Activated CD8-positive, alpha-beta T cell treated with anti-CD3 and anti-CD28 coated beads for 36 hours (primary cell): ENCODE measurements at regions of chr20 and their contacts with region 1.

Region 1: DNA sequence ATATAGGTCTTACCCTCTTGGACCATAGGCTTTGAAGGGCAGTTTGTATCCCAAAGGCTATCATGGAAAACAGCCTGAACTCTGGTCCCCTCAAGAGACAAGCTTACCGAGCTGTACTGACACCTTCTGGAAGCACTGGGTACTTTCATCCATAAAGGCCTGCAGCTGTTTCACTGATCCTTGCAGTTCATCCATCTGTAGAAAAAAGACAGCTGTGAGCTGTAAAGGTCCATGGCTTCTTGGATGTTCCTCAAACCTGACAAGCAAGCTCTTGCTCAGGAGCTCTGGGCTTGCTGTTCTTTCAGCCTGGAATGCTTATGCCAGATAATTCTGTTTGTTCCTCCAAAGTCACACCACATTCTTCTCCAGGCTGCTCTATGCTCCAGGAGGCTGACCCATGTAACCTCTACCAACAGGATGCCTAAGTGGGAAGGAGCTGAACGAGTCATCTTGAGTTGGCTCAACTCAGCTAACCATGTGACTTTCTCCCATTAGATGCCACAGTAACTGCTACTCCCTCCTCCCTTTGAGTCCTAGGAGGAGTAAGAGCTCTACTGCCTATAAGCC is 8.8 kb upstream of the NDRG3 start:
- DNase-seq: peak; percentile 41
- ATAC-seq: peak; percentile 83
- H3K4me3 Mint-ChIP-seq: no peak overlapping the region
- H3K27ac Mint-ChIP-seq: no peak overlapping the region
- H3K4me1 Mint-ChIP-seq: peaks cover 5% of the 10 kb centered on the region
- H3K27me3 Mint-ChIP-seq: no peaks in the 10 kb centered on the region
- CTCF ChIP-seq: peak; percentile 61

Region 2: GRCh38 chr20:36562724-36563123 is 192.0 kb before region 1 on chr20:
- CTCF ChIA-PET with region 1: interaction called, 11 read pairs
- POLR2A ChIA-PET with region 1: no interaction called
- intact Hi-C with region 1: no loop called
- DNase-seq: no peak
- ATAC-seq: no peak
- H3K4me3 Mint-ChIP-seq: no peak overlapping the region
- H3K27ac Mint-ChIP-seq: no peak overlapping the region
- H3K4me1 Mint-ChIP-seq: peaks cover 3% of the 10 kb centered on the region
- H3K27me3 Mint-ChIP-seq: no peaks in the 10 kb centered on the region
- CTCF ChIP-seq: no peak

Region 3: DNA sequence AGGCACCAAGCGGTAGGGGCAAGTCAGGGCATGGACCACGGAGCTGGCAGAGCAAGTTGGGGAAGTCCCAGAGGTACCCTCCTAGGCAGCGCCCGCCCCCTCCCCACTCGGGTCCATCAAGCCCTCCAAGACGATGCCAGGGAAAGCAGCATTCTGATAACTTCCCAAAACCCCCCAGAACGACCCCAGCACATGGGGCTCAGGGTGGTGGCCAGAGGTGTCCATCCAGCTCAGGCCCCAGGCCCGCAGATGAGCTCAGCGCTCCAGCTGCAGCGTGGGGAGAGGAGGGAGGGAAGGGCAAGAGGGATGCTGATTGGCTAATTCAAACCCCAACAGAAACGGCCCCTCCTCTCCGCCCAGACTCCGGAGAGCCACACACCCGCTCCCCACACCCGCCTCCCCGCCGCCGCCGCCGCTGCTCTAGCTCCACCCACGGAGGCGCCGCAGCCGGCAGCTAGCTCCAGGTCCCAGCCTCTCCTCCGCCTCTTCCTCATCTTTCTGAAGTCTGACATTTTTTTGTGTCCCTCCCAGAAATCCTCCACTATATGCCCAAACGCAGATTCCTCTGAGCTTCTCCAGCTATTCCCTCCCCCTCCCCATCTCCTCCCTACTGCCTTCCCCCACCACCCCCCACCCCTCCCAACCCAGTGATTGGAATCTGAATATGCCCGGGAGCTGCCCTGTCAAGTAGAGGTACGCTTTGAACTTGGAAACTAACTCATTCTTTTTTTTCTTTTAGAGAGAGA is 80.9 kb after region 1 on chr20:
- CTCF ChIA-PET with region 1: no interaction called
- POLR2A ChIA-PET with region 1: no interaction called
- intact Hi-C with region 1: no loop called
- DNase-seq: peak; percentile 93
- ATAC-seq: peak; percentile 96
- H3K4me3 Mint-ChIP-seq: peak overlapping the region; percentile 75
- H3K27ac Mint-ChIP-seq: peak overlapping the region; percentile 88
- H3K4me1 Mint-ChIP-seq: peaks cover 12% of the 10 kb centered on the region
- H3K27me3 Mint-ChIP-seq: no peaks in the 10 kb centered on the region
- CTCF ChIP-seq: no peak